CD4-positive, alpha-beta memory T cell (primary cell): ENCODE measurements at regions of chr3 and their contacts with region 1.

Region 1: DNA sequence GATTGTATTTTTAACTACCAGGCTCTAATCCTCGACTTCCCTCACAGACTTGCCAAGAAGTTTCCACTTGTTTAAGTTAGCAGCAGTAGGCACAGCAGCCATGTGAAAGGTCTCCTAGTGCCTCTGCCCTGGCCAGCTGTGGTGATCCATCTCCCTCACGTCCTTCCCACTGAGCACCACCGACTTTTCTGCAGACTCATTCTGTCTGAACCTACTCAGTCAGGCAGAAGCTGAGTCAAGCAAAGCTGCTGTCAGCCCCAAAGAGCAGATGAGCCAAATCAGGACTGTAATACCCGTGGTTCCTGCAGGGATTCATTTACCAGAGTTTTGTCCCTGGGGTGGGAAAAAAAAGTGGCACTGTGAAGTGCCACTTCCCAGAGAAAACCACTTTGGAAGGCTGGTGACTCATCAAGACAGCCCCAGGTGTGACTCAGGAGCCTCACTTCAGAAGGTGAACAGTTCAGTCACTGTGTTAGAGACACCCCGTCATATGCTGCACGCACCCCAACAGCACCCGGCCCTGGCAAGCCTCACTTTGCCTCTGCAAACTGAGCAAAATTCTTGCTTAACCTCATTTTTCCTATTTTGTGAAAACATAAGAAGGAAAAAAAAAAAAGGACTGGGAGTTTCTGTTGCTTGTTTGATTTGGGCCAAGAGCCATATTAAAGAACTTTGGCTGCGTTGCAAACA is 76.0 kb downstream of the WWTR1 start:
- DNase-seq: no peak
- H3K4me3 ChIP-seq: no peak overlapping the region
- H3K4me3 Mint-ChIP-seq: no peak overlapping the region
- H3K27ac ChIP-seq: no peak overlapping the region
- H3K27ac Mint-ChIP-seq: peak overlapping the region in 2 of 7 donors; percentile 8 to 15
- H3K4me1 ChIP-seq: peaks cover 11% of the 10 kb centered on the region
- H3K4me1 Mint-ChIP-seq: peaks cover 0 to 15% (median 10%) of the 10 kb centered on the region in 4 donors
- H3K27me3 ChIP-seq: no peaks in the 10 kb centered on the region
- H3K27me3 Mint-ChIP-seq: peaks cover 4 to 10% of the 10 kb centered on the region in 2 donors

Region 2: DNA sequence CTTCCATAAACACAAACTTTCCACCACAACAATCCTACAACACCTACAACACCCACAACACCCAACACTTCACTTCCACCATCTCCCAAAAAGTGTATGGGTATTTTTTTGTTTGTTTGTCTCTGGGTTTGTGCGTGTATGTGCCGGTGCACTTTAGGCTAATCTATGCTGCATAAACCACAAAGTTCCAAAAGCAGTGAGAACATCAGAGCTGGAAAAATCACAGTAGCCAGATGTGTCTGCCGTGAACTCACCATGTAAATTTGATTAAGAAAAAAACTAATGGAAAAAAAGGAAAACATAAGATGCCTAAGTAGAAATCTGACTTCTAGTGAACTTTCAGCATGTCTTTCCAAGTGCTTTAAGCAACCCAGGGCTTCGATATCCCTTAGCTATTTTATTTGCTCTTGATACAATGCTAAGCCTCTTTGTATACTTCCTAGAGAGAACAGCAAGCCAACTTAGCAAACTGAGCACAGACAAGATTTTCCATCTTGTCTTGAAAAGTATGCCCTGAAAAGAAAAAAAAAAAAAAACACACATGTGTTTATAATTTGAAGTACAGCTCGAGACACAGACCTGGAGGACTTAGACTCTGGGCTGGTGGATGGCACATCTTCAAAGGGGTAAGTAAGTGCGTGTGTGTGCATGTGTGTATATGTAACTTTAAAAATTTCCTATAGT is 15.4 kb before region 1 on chr3:
- CTCF ChIA-PET with region 1: interaction called, 19 read pairs
- POLR2A ChIA-PET with region 1: no interaction called
- intact Hi-C with region 1: no loop called
- DNase-seq: no peak
- H3K4me3 ChIP-seq: no peak overlapping the region
- H3K4me3 Mint-ChIP-seq: no peak overlapping the region
- H3K27ac ChIP-seq: no peak overlapping the region
- H3K27ac Mint-ChIP-seq: no peak overlapping the region
- H3K4me1 ChIP-seq: no peaks in the 10 kb centered on the region
- H3K4me1 Mint-ChIP-seq: peaks cover 0 to 1% (median 0%) of the 10 kb centered on the region in 4 donors
- H3K27me3 ChIP-seq: no peaks in the 10 kb centered on the region
- H3K27me3 Mint-ChIP-seq: peaks cover 0 to 2% of the 10 kb centered on the region in 2 donors

Region 3: GRCh38 chr3:150408221-150409102 is 826.6 kb after region 1 on chr3 and contains the start of gene TSC22D2:
- CTCF ChIA-PET with region 1: no interaction called
- POLR2A ChIA-PET with region 1: no interaction called
- intact Hi-C with region 1: no loop called
- DNase-seq: peak; percentile 96 to 98 (median 97)
- H3K4me3 ChIP-seq: peak within 1 kb of the TSS; percentile 79 to 93
- H3K4me3 Mint-ChIP-seq: peak within 1 kb of the TSS; percentile 85 to 98 (median 89)
- H3K27ac ChIP-seq: peak within 1 kb of the TSS; percentile 95
- H3K27ac Mint-ChIP-seq: peak within 1 kb of the TSS; percentile 89 to 99 (median 98)
- H3K4me1 ChIP-seq: peaks cover 34% of the 10 kb centered on the region
- H3K4me1 Mint-ChIP-seq: peaks cover 23 to 36% (median 30%) of the 10 kb centered on the region in 4 donors
- H3K27me3 ChIP-seq: no peaks in the 10 kb centered on the region
- H3K27me3 Mint-ChIP-seq: no peaks in the 10 kb centered on the region
- total RNA-seq, gene TSC22D2: 25.3 to 25.7 TPM